Naive thymus-derived CD4-positive, alpha-beta T cell (primary cell): ENCODE measurements at regions of chr1 and their contacts with region 1.

Region 1: GRCh38 chr1:220776720-220777326 is 9.9 kb upstream of the MTARC1 start:
- DNase-seq: peak; percentile 7 to 73 (median 48)
- ATAC-seq: peak; percentile 86
- H3K4me3 ChIP-seq: no peak overlapping the region
- H3K4me3 Mint-ChIP-seq: no peak overlapping the region
- H3K27ac ChIP-seq: no peak overlapping the region
- H3K27ac Mint-ChIP-seq: no peak overlapping the region
- H3K4me1 ChIP-seq: no peaks in the 10 kb centered on the region
- H3K4me1 Mint-ChIP-seq: peaks cover 0 to 4% (median 0%) of the 10 kb centered on the region in 7 donors
- H3K27me3 ChIP-seq: no peaks in the 10 kb centered on the region
- H3K27me3 Mint-ChIP-seq: peaks cover 6 to 23% (median 15%) of the 10 kb centered on the region in 5 donors

Region 2: DNA sequence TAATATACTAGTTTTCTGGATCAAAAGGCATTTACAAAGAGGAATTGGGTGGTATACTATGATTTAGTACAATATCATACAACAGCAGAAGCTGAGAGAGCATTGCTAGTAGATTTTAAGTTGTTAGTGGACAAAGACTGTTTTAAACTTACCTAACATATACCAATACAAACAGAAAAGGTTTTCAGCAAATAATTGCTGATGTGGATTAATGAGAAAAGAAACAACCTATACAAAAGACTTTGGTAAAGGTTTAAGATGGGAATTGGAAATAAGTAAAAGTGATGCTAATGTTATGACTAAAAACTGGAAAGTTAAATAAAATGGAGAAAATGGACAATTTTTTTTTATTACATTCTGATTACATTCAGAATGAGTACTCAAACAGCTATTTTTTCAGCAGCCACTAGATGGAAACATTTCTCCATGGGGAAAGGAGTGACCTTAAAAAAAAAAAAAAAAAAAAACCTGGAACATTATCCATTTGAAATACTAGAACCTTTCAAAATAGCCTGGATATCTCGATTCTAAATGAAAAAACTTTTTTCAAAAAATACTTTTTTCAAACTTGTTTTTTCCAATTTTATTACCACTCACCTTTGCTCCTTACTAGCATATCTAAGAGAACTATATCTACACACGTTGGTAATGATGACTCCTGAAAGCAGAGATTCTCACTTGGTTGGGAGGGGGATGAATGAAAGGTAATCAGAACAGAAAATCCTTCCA is 785.9 kb before region 1 on chr1:
- CTCF ChIA-PET with region 1: no interaction called
- POLR2A ChIA-PET with region 1: no interaction called
- intact Hi-C with region 1: loop called in 1 of 2 experiments (anchors 2 kb)
- DNase-seq: peak in 1 of 9 donors; percentile 3
- ATAC-seq: no peak
- H3K4me3 ChIP-seq: no peak overlapping the region
- H3K4me3 Mint-ChIP-seq: no peak overlapping the region
- H3K27ac ChIP-seq: no peak overlapping the region
- H3K27ac Mint-ChIP-seq: peak overlapping the region in 2 of 9 donors; percentile 2 to 7
- H3K4me1 ChIP-seq: no peaks in the 10 kb centered on the region
- H3K4me1 Mint-ChIP-seq: peaks cover 0 to 4% (median 0%) of the 10 kb centered on the region in 7 donors
- H3K27me3 ChIP-seq: no peaks in the 10 kb centered on the region
- H3K27me3 Mint-ChIP-seq: no peaks in the 10 kb centered on the region

Region 3: GRCh38 chr1:220189750-220190347 is 587.0 kb before region 1 on chr1:
- CTCF ChIA-PET with region 1: no interaction called
- POLR2A ChIA-PET with region 1: no interaction called
- intact Hi-C with region 1: loop called in 1 of 2 experiments (anchors 2 kb)
- DNase-seq: peak in 2 of 9 donors; percentile 10 to 13
- ATAC-seq: no peak
- H3K4me3 ChIP-seq: no peak overlapping the region
- H3K4me3 Mint-ChIP-seq: no peak overlapping the region
- H3K27ac ChIP-seq: no peak overlapping the region
- H3K27ac Mint-ChIP-seq: peak overlapping the region in 1 of 9 donors; percentile 51
- H3K4me1 ChIP-seq: no peaks in the 10 kb centered on the region
- H3K4me1 Mint-ChIP-seq: no peaks in the 10 kb centered on the region
- H3K27me3 ChIP-seq: no peaks in the 10 kb centered on the region
- H3K27me3 Mint-ChIP-seq: no peaks in the 10 kb centered on the region

Region 4: GRCh38 chr1:220294846-220295301 is 481.9 kb before region 1 on chr1:
- CTCF ChIA-PET with region 1: no interaction called
- POLR2A ChIA-PET with region 1: no interaction called
- intact Hi-C with region 1: loop called (anchors 1 to 5 kb)
- DNase-seq: no peak
- ATAC-seq: no peak
- H3K4me3 ChIP-seq: no peak overlapping the region
- H3K4me3 Mint-ChIP-seq: no peak overlapping the region
- H3K27ac ChIP-seq: no peak overlapping the region
- H3K27ac Mint-ChIP-seq: no peak overlapping the region
- H3K4me1 ChIP-seq: no peaks in the 10 kb centered on the region
- H3K4me1 Mint-ChIP-seq: peaks cover 0 to 5% (median 0%) of the 10 kb centered on the region in 7 donors
- H3K27me3 ChIP-seq: no peaks in the 10 kb centered on the region
- H3K27me3 Mint-ChIP-seq: peaks cover 10 to 35% (median 24%) of the 10 kb centered on the region in 5 donors

Region 5: GRCh38 chr1:220690140-220691025 is 86.4 kb before region 1 on chr1 and contains the start of gene C1orf115:
- CTCF ChIA-PET with region 1: no interaction called
- POLR2A ChIA-PET with region 1: no interaction called
- intact Hi-C with region 1: loop called in 1 of 2 experiments (anchors 1 kb)
- DNase-seq: peak; percentile 57 to 81 (median 71)
- ATAC-seq: peak; percentile 99
- H3K4me3 ChIP-seq: peak within 1 kb of the TSS; percentile 58
- H3K4me3 Mint-ChIP-seq: peak within 1 kb of the TSS; percentile 71 to 89 (median 86)
- H3K27ac ChIP-seq: peak within 1 kb of the TSS; percentile 43
- H3K27ac Mint-ChIP-seq: peak within 1 kb of the TSS in 3 of 9 donors; percentile 22 to 52 (median 32)
- H3K4me1 ChIP-seq: peaks cover 5 to 8% of the 10 kb centered on the region in 2 donors
- H3K4me1 Mint-ChIP-seq: peaks cover 5 to 14% (median 7%) of the 10 kb centered on the region in 7 donors
- H3K27me3 ChIP-seq: no peaks in the 10 kb centered on the region
- H3K27me3 Mint-ChIP-seq: peaks cover 5 to 32% (median 11%) of the 10 kb centered on the region in 5 donors
- total RNA-seq, gene C1orf115: 0.17 to 2.1 (median 1.5) TPM